Activated B cell treated with CpG ODN at 0.5 μM for 24 hours (primary cell): ENCODE measurements at regions of chr1 and their contacts with region 1.

Region 1: GRCh38 chr1:192808518-192809306 is at the start of gene RGS2:
- DNase-seq: peak; percentile 79
- ATAC-seq: peak; percentile 91
- H3K4me3 Mint-ChIP-seq: peak within 1 kb of the TSS; percentile 96
- H3K27ac Mint-ChIP-seq: peak within 1 kb of the TSS; percentile 90
- H3K4me1 Mint-ChIP-seq: peaks cover 48% of the 10 kb centered on the region
- H3K27me3 Mint-ChIP-seq: no peaks in the 10 kb centered on the region
- CTCF ChIP-seq: no peak
- total RNA-seq, gene RGS2: 31.1 and 32.7 TPM in 2 replicates

Region 2: DNA sequence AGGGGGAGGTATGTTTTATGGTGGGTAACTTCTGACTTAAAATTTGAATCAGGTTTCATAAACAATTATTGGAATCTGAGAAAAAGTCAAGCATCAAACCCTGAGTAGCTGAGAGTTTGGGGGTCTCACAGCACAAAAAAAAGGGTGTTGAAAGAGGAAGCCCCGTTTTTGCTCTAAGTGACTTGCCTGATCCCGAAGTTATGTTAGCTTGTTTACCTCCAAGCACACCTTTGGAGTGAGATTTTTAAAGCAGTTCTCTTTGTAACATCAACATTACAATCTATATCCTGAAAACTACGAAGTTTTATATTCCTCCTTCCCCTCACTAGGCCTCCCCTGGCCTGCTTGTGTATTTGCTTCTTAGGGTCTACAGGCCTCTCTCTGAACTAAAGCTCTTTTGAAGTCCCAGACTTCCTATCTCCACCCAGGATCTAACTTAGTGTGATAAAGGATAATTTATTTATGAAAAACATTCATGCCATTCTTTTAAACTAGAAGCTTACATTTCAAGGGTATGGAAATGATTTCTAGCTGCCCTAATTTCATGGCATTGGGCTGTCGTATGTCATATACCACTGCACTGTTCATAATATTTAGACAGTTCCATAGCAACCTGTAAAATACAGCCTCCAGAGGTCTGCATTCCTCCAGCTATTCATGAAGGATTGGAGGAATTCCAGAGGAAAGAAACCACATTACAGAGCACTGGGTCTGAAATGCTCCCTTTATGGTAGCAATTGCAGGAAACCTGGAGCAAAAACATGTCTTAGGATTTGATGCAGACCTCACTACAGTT is 269.2 kb before region 1 on chr1:
- CTCF ChIA-PET with region 1: no interaction called
- POLR2A ChIA-PET with region 1: no interaction called
- intact Hi-C with region 1: loop called (anchors 5 kb)
- DNase-seq: no peak
- ATAC-seq: peak; percentile 25
- H3K4me3 Mint-ChIP-seq: peak overlapping the region; percentile 69
- H3K27ac Mint-ChIP-seq: peak overlapping the region; percentile 86
- H3K4me1 Mint-ChIP-seq: peaks cover 61% of the 10 kb centered on the region
- H3K27me3 Mint-ChIP-seq: no peaks in the 10 kb centered on the region
- CTCF ChIP-seq: no peak

Region 3: GRCh38 chr1:192626366-192627179 is 182.1 kb before region 1 on chr1:
- CTCF ChIA-PET with region 1: no interaction called
- POLR2A ChIA-PET with region 1: no interaction called
- intact Hi-C with region 1: loop called (anchors 5 kb)
- DNase-seq: no peak
- ATAC-seq: peak; percentile 90
- H3K4me3 Mint-ChIP-seq: peak overlapping the region; percentile 44
- H3K27ac Mint-ChIP-seq: no peak overlapping the region
- H3K4me1 Mint-ChIP-seq: peaks cover 19% of the 10 kb centered on the region
- H3K27me3 Mint-ChIP-seq: peaks cover 65% of the 10 kb centered on the region
- CTCF ChIP-seq: no peak

Region 4: DNA sequence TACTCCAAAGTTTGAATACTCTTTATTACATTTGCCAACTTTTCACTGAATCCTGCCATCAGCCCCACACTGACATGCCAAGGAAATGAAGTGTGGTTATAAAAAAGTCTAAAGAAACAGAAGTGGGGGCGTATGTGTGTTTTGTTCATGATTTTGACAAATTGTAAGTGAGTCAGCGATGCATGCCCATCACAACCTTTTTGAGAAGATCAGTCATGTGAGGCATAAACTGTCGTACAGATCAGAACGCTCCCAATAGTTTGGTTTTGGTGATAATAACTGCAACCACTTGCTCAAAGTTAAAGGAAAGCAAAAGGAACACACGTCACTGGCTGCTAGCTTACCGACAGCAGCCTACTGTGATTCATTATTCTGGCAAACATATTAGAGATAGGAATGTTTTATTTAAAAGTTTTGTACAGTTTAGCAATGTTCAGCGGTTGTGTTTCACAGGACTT is 95.8 kb after region 1 on chr1:
- CTCF ChIA-PET with region 1: no interaction called
- POLR2A ChIA-PET with region 1: no interaction called
- intact Hi-C with region 1: no loop called
- DNase-seq: no peak
- ATAC-seq: no peak
- H3K4me3 Mint-ChIP-seq: no peak overlapping the region
- H3K27ac Mint-ChIP-seq: no peak overlapping the region
- H3K4me1 Mint-ChIP-seq: peaks cover 5% of the 10 kb centered on the region
- H3K27me3 Mint-ChIP-seq: no peaks in the 10 kb centered on the region
- CTCF ChIP-seq: no peak

Region 5: GRCh38 chr1:193059268-193060225 is 250.8 kb after region 1 on chr1 and contains the starts of genes RO60 and UCHL5:
- CTCF ChIA-PET with region 1: interaction called, 8 read pairs
- POLR2A ChIA-PET with region 1: interaction called, 50 read pairs
- intact Hi-C with region 1: loop called (anchors 1 kb)
- DNase-seq: peak; percentile 85
- ATAC-seq: peak; percentile 94
- H3K4me3 Mint-ChIP-seq: peak within 1 kb of the TSS; percentile 100
- H3K27ac Mint-ChIP-seq: peak within 1 kb of the TSS; percentile 99
- H3K4me1 Mint-ChIP-seq: peaks cover 54% of the 10 kb centered on the region
- H3K27me3 Mint-ChIP-seq: no peaks in the 10 kb centered on the region
- CTCF ChIP-seq: no peak
- total RNA-seq, gene RO60: 55.9 and 61.1 TPM in 2 replicates
- total RNA-seq, gene UCHL5: 32.3 and 36.4 TPM in 2 replicates

Region 6: DNA sequence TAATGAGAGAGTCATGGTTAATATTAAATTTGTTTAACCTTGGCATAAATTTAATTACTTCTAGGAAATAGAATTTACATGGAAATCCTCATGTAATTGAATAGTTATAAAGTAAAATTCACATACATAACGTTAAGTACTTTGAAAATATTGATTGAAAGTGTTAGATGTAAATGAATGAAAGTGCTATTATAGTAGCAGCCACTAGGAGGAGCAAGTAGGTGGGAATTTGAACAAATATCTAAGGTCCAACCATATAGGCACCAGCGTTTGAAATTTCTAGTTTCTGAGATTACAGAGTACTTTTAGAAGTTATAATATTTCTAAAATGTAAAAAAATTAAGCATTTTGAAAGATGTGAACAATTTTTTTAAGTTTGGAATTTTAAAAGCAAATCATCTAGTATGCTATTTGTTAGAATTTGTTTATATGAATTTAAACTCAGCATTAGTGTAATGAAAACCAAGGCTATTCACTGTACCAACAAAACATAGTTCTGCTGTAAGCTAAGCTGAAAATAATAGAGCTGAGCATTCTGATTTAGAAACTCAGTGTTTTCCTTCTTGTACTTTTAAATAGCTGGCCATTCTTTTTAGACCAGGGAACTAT is 374.4 kb after region 1 on chr1:
- CTCF ChIA-PET with region 1: no interaction called
- POLR2A ChIA-PET with region 1: no interaction called
- intact Hi-C with region 1: loop called (anchors 5 kb)
- DNase-seq: no peak
- ATAC-seq: peak; percentile 61
- H3K4me3 Mint-ChIP-seq: no peak overlapping the region
- H3K27ac Mint-ChIP-seq: no peak overlapping the region
- H3K4me1 Mint-ChIP-seq: peaks cover 24% of the 10 kb centered on the region
- H3K27me3 Mint-ChIP-seq: no peaks in the 10 kb centered on the region
- CTCF ChIP-seq: peak; percentile 83

Region 7: DNA sequence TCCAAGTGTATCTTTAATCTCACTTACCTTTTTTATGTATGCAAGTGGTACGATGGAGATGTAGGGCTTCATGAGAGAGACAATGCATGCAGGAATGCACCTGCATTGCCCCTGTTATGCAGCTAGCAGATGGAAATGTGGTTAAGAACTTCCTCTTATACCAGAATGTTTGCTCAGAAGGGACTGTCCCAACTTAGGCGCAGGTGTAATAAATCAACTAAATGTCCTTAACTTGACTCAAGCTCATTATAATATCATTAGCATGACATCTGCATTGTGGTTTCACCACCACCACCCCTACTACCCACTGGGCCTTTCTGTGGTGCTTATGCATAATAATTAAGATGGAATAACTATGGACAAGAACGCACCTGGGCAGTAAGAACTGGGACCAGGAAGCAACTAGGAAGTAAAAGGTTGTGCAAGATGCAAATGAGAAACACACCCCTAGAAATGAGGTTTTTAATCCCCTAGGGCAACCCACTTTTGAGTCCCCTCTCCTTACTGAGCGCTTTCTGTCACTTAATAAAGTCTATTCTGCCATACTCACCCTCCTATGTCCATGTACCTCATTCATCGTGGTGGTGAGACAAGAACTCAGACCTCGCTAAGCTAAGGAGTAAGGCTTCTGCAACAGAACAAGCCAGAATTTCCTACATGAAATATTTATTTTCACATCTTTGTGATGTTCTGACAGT is 1481.0 kb after region 1 on chr1:
- CTCF ChIA-PET with region 1: no interaction called
- POLR2A ChIA-PET with region 1: no interaction called
- intact Hi-C with region 1: loop called (anchors 1 kb)
- DNase-seq: peak; percentile 35
- ATAC-seq: peak; percentile 91
- H3K4me3 Mint-ChIP-seq: peak overlapping the region; percentile 38
- H3K27ac Mint-ChIP-seq: peak overlapping the region; percentile 77
- H3K4me1 Mint-ChIP-seq: peaks cover 23% of the 10 kb centered on the region
- H3K27me3 Mint-ChIP-seq: peaks cover 3% of the 10 kb centered on the region
- CTCF ChIP-seq: no peak